ENCODE measurements at regions of chr11 and their contacts with region 1.

Region 1: GRCh38 chr11:1763796-1764661 is at the start of gene CTSD:
- DNase-seq: peak; percentile 66 to 92 (median 86)
- ATAC-seq: peak; percentile 86
- H3K4me3 ChIP-seq: peak within 1 kb of the TSS; percentile 72
- H3K4me3 Mint-ChIP-seq: peak within 1 kb of the TSS; percentile 95
- H3K27ac ChIP-seq: peak within 1 kb of the TSS; percentile 55 to 65
- H3K27ac Mint-ChIP-seq: peak within 1 kb of the TSS; percentile 81
- H3K4me1 ChIP-seq: peaks cover 54% of the 10 kb centered on the region
- H3K4me1 Mint-ChIP-seq: peaks cover 29% of the 10 kb centered on the region
- H3K27me3 ChIP-seq: peaks cover 0 to 2% of the 10 kb centered on the region in 2 experiments
- H3K27me3 Mint-ChIP-seq: no peaks in the 10 kb centered on the region
- CTCF ChIP-seq: no peak
- total RNA-seq, gene CTSD: 63.3 to 71.3 TPM

Region 2: GRCh38 chr11:1832211-1832919 is 68.3 kb after region 1 on chr11:
- CTCF ChIA-PET with region 1: no interaction called
- POLR2A ChIA-PET with region 1: no interaction called
- intact Hi-C with region 1: loop called in 1 of 2 experiments (anchors 5 kb)
- DNase-seq: peak; percentile 45 to 84 (median 64)
- ATAC-seq: peak; percentile 75
- H3K4me3 ChIP-seq: no peak overlapping the region
- H3K4me3 Mint-ChIP-seq: no peak overlapping the region
- H3K27ac ChIP-seq: no peak overlapping the region
- H3K27ac Mint-ChIP-seq: no peak overlapping the region
- H3K4me1 ChIP-seq: peaks cover 10% of the 10 kb centered on the region
- H3K4me1 Mint-ChIP-seq: no peaks in the 10 kb centered on the region
- H3K27me3 ChIP-seq: peaks cover 8 to 16% of the 10 kb centered on the region in 2 experiments
- H3K27me3 Mint-ChIP-seq: peaks cover 5% of the 10 kb centered on the region
- CTCF ChIP-seq: peak; percentile 97